ENCODE measurements at regions of chr4 and their contacts with region 1.

Region 1: DNA sequence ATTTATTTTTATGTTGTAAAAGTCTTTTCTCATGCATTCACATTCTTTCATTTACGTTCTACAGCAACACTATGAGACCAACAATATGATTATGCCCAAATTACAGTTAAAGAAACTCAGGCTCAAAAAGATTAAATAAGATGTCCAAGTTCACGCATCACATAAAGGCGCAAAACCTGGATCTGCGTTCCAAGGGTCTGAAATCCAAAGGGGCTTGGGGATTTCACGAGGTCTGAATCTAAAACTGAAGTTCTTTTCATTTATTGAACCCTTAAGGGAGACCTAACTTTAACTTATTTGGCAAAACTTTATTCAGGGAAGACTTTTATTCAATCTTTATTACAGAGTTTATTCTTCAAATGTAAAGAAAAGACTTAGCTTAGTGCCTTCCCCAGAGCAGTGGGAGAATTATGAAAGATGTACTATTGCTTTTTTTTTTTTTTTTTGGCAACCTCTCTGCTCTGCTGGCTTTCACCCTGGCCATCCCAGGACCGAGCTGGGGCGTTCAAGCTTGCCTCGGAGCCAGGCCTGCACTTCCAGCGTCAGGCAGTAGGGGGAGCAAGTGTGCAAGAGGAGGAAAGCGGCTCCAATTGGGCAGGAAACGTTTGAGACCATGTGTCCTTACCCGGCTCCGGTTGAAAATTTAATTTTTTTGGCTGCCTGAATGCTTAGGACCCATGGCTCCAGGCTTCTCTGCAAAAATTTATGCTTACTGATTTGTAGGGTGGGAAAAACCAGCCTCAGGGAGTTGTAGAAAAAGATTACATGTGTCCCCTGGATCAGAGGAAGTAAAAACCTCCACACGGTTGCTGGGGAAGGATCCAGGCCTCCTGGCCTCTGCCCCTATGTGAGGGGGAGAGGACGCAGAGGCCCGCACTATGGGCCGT is 344.3 kb upstream of the KLF3 start:
- DNase-seq: peak; percentile 93 to 97 (median 96)
- ATAC-seq: peak; percentile 94
- H3K4me3 ChIP-seq: peak overlapping the region in 1 of 2 donors; percentile 35
- H3K27ac ChIP-seq: peak overlapping the region; percentile 87 to 94
- H3K4me1 ChIP-seq: peaks cover 8 to 31% of the 10 kb centered on the region in 2 donors
- H3K27me3 ChIP-seq: no peaks in the 10 kb centered on the region
- CTCF ChIP-seq: peak; percentile 99

Region 2: DNA sequence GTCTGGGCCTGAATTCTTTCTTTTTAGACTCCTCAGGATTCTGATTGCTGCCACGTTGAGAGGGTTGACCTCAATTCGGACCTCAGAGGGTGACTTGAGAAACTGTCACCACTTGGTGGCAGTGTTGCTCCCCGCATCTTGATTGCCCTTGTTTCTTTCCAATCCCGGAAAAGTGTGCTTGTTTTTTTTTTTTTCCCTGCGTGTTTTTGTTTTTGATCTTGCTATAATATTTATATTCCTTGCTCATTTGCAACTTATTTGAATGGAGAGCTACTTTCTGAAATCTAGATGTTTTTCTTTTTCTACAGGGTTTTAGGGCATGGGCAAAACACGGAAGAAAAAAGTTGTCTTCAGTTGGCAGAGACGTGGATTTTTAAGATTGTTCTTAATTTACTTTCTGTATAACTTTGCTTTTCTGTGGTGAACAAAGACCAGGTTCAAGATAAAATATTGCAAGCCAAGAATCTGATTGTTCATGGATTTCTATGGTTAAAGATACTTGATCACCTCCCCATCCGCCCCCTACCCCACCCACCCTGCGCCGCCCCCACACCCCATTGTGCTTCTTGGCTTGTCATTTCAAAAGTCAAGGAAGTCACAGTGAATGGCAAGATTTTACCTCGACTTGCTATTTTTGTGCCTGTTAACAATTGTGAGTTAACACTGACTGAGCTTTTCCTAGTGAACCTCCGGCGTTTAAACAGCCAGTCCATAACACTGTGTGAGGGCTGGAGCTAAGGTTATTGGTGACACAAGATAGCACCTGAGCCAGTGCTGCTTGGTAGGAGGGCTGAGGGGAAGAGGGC is 257.4 kb before region 1 on chr4:
- intact Hi-C with region 1: loop called in 1 of 2 experiments (anchors 10 kb)
- DNase-seq: peak in 3 of 4 donors; percentile 70 to 89 (median 74)
- ATAC-seq: peak; percentile 93
- H3K4me3 ChIP-seq: peak overlapping the region; percentile 8 to 24
- H3K27ac ChIP-seq: peak overlapping the region in 1 of 2 donors; percentile 53
- H3K4me1 ChIP-seq: peaks cover 0 to 16% of the 10 kb centered on the region in 2 donors
- H3K27me3 ChIP-seq: no peaks in the 10 kb centered on the region
- CTCF ChIP-seq: peak; percentile 76 to 79

Region 3: DNA sequence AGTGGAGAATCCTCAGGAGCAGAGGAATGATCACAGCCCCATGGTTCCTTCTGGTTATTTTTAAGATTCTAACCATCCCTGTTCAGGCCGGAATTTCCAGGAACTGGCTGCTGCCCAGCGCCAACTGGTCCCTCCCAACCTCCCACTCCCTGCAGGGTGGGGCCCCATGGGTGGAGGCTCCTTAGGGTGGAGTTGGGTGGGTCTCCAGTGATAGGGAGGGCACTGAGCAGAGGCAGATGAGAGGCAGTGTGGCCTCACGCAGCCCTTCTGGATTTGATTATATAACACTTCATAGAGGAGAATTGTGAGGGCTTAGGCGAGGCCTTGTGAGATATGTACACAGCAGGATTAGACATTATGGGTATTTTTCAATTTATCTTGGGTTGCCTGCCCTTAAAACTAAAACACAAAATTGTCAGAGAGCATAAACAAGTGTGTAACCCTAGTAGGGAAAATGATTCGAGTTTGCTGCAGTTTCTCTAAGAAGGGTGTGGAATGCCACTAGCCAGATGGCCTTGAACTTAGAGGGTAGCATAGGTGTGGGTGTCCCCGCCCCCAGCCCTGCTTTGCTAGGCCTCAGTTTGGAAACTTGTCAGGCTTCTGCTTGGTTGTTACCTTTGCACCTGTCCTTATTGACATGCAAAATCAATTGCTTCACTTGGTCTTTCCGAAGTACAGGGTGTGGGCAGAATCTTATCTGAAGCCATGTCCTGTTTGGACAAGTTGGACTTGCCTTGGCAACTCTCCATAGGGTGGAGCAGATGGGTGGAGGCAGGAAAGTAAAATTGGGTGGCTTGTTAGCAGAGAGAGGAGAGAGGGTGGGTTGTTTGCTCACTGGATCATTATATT is 353.7 kb after region 1 on chr4:
- intact Hi-C with region 1: loop called in 1 of 2 experiments (anchors 5 kb)
- DNase-seq: peak in 3 of 4 donors; percentile 61 to 81 (median 78)
- ATAC-seq: peak; percentile 63
- H3K4me3 ChIP-seq: no peak overlapping the region
- H3K27ac ChIP-seq: peak overlapping the region; percentile 78 to 100
- H3K4me1 ChIP-seq: peaks cover 68 to 97% of the 10 kb centered on the region in 2 donors
- H3K27me3 ChIP-seq: no peaks in the 10 kb centered on the region
- CTCF ChIP-seq: no peak